Panc1 (cell line): ENCODE measurements at regions of chr18 and their contacts with region 1.

Region 1: GRCh38 chr18:54392543-54393023 is 34.9 kb downstream of the C18orf54 start:
- DNase-seq: peak; percentile 36
- ATAC-seq: 0 out of 2 replicates have a peak, but pooled peaks have one; percentile 62
- H3K4me3 ChIP-seq: no peak overlapping the region
- H3K27ac ChIP-seq: no peak overlapping the region
- H3K4me1 ChIP-seq: peaks cover 4% of the 10 kb centered on the region; the same call in 1 of the 2 replicates
- H3K27me3 ChIP-seq: no peaks in the 10 kb centered on the region
- CTCF ChIP-seq: peak; percentile 65

Region 2: DNA sequence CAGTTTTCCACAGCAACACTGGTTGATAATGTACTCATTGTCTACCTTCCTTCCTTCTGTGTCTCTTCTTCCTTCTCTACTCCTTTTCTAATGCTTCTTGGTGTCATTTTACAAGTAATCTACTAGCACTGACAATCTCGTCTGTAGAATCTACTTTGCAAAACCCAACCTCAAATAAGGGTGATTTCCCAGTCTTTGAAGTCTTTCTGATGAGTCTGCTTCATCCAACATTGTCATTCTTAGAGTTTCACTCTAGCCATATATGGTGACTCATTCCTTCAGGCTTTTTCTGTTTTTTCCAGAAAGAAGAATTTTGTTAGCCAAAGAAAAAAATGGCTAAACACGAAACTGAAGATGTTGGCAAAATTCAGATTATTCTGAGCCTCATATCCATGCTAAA is 456.8 kb before region 1 on chr18:
- CTCF ChIA-PET with region 1: no interaction called
- POLR2A ChIA-PET with region 1: no interaction called
- in situ Hi-C with region 1: no loop called
- intact Hi-C with region 1: no loop called
- DNase-seq: no peak
- ATAC-seq: no peak
- H3K4me3 ChIP-seq: no peak overlapping the region
- H3K27ac ChIP-seq: no peak overlapping the region
- H3K4me1 ChIP-seq: no peaks in the 10 kb centered on the region
- H3K27me3 ChIP-seq: no peaks in the 10 kb centered on the region
- CTCF ChIP-seq: no peak

Region 3: DNA sequence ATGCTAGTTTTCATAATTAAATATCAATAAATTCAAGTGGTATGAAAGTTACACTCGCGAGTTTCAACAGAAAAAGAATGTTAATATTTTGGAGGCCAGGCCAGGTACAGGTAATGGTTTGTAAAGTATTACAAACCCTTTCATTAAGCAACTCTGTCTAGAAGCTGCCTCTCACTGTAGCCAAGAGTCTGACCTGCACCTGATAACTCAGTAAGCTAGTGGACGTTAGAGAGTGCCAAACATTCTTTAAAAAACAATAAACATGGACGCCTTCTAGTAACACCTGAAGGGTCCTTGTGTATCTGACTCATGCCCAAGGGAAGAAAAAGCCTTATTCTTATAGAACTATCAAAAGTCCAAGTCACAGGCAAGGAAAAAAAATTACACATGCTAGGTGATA is 238.4 kb before region 1 on chr18:
- CTCF ChIA-PET with region 1: no interaction called
- POLR2A ChIA-PET with region 1: no interaction called
- in situ Hi-C with region 1: no loop called
- intact Hi-C with region 1: no loop called
- DNase-seq: no peak
- ATAC-seq: no peak
- H3K4me3 ChIP-seq: no peak overlapping the region
- H3K27ac ChIP-seq: no peak overlapping the region
- H3K4me1 ChIP-seq: no peaks in the 10 kb centered on the region
- H3K27me3 ChIP-seq: no peaks in the 10 kb centered on the region
- CTCF ChIP-seq: no peak

Region 4: GRCh38 chr18:54671291-54671881 is 278.8 kb after region 1 on chr18:
- CTCF ChIA-PET with region 1: interaction called, 3 read pairs
- POLR2A ChIA-PET with region 1: no interaction called
- in situ Hi-C with region 1: no loop called
- intact Hi-C with region 1: loop called (anchors 5 kb)
- DNase-seq: no peak
- ATAC-seq: no peak
- H3K4me3 ChIP-seq: no peak overlapping the region
- H3K27ac ChIP-seq: no peak overlapping the region
- H3K4me1 ChIP-seq: no peaks in the 10 kb centered on the region
- H3K27me3 ChIP-seq: no peaks in the 10 kb centered on the region
- CTCF ChIP-seq: peak; percentile 27; the same call in 1 of the 2 replicates